Activated naive CD4-positive, alpha-beta T cell treated with anti-CD3 and anti-CD28 coated beads for 36 hours (primary cell): ENCODE measurements at regions of chr3 and their contacts with region 1.

Region 1: DNA sequence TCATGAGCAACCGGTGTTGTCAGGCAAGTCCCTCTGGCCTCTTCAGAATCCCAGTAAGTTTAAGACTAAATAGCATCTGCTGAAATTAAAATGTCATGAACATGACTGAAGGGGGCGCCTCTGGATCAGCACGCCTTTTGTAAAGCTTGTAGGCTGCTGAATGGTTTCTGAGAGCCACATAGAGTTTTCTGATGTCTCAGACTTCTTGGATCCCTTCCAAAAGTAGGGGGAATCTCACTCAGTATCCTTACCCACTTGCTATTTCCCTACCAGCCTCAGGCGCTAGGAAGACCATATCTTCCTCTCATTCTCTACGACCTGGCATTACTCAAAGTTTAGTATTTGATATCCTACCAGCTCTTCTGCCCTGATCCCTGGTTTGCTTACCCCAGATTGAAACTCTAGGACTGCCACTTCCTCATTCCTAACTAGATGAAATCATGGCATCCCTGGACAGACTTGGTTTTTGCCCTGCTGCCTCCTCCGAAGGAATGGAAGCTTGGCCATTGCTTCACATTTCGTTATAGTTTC is 62.7 kb upstream of the CD47 start:
- DNase-seq: peak; percentile 79
- H3K4me3 Mint-ChIP-seq: no peak overlapping the region
- H3K27ac Mint-ChIP-seq: no peak overlapping the region
- H3K4me1 Mint-ChIP-seq: peaks cover 10% of the 10 kb centered on the region
- H3K27me3 Mint-ChIP-seq: no peaks in the 10 kb centered on the region

Region 2: GRCh38 chr3:108322352-108322751 is 168.8 kb after region 1 on chr3:
- CTCF ChIA-PET with region 1: interaction called, 4 read pairs
- intact Hi-C with region 1: loop called (anchors 1 kb)
- DNase-seq: peak; percentile 55
- H3K4me3 Mint-ChIP-seq: no peak overlapping the region
- H3K27ac Mint-ChIP-seq: no peak overlapping the region
- H3K4me1 Mint-ChIP-seq: peaks cover 9% of the 10 kb centered on the region
- H3K27me3 Mint-ChIP-seq: no peaks in the 10 kb centered on the region

Region 3: GRCh38 chr3:108406661-108407206 is 253.2 kb after region 1 on chr3:
- CTCF ChIA-PET with region 1: interaction called, 8 read pairs
- intact Hi-C with region 1: loop called (anchors 1 kb)
- DNase-seq: peak; percentile 25
- H3K4me3 Mint-ChIP-seq: no peak overlapping the region
- H3K27ac Mint-ChIP-seq: no peak overlapping the region
- H3K4me1 Mint-ChIP-seq: peaks cover 2% of the 10 kb centered on the region
- H3K27me3 Mint-ChIP-seq: peaks cover 3% of the 10 kb centered on the region

Region 4: DNA sequence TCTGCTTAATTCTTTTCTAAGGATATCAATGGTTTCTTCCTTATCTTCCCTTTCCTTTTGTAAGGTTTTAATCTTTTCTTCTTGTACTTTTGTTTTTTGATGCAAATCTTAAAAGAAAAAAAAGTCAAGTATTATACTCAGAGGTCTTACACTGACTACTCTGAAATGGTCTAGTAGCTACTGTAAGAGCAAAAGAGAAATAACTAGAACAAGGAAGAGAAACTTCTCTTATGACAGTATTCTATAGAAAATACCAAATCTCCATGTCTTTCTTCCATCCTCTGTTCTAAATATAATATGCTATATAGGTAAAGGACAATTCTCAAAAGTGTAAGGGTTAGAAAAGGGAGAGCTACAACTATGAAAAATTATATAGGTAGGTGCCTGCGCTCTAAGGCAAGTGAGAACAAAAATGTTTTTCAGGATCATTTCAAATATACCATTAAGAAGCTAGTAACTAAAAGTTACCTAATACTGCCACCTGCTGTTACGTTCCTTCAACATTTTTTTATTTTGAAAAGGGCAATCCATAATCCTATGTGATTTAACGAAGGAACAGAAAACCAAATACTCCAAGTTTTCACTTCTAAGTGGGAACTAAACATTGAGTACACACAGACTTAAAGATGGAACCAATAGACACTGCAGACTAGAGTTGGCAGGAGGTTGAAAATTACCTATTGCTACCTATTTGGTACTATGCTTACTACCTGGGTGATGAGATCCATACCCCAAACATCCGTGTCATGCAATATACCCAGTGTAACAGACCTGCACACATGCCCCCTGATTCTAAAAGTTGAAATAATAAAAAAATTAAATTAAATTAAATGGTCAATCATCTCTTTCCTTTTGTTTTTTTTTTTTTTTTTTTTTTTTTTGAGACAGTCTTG is 399.0 kb after region 1 on chr3:
- CTCF ChIA-PET with region 1: interaction called, 3 read pairs
- intact Hi-C with region 1: loop called (anchors 5 kb)
- DNase-seq: no peak
- H3K4me3 Mint-ChIP-seq: no peak overlapping the region
- H3K27ac Mint-ChIP-seq: no peak overlapping the region
- H3K4me1 Mint-ChIP-seq: peaks cover 2% of the 10 kb centered on the region
- H3K27me3 Mint-ChIP-seq: no peaks in the 10 kb centered on the region